Heart right ventricle (tissue), 16 donors: ENCODE measurements at regions of chr22 and their contacts with region 1.

Region 1: DNA sequence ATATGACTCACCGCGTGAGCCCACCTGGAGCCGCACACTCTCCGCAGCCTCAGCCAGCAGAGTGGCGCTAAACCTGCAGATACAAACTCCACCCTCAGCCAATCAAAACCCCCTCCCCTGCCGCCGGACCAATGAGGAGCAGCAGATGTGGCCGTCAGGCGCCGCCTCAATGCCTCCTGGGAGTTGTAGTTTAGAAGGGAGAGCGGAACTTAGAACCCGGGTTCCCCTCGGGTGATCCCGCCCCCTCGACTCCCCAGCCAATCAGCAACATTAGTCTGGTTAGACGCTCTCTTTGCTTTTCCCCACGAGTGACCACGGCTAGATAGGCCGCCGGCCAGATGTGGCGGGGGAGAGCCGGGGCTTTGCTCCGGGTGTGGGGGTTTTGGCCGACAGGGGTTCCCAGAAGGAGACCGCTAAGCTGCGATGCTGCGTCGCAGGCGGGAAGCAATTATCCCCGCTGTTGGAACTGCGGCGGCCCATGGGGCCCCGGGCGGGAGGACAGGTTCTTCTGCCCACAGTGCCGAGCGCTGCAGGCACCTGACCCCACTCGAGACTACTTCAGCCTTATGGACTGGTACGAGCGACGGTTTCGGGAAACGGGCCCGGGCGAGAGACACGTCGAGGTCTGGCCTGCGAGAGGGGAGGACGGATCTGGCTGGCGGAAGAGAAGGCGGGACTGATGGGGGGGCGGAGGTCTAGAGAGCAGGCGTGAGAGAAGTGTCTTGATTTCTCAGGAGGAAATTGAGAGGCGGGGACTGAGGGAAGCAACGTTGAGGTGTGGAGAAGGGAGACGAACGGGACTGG is at the starts of genes CHEK2 and HSCB:
- DNase-seq: peak; percentile 97 to 99
- ATAC-seq: peak; percentile 98 to 99 (median 99)
- H3K4me3 ChIP-seq: peak within 1 kb of the TSS; percentile 69 to 100 (median 80)
- H3K27ac ChIP-seq: peak within 1 kb of the TSS; percentile 91 to 100 (median 98)
- H3K4me1 ChIP-seq: peaks cover 3 to 22% (median 14%) of the 10 kb centered on the region in 9 donors
- H3K27me3 ChIP-seq: no peaks in the 10 kb centered on the region
- CTCF ChIP-seq: peak in 3 of 9 donors; percentile 5 to 32 (median 20)
- total RNA-seq, gene CHEK2: 0.74 to 8.0 (median 1.6) TPM
- total RNA-seq, gene HSCB: 7.1 to 13.8 (median 8.7) TPM

Region 2: DNA sequence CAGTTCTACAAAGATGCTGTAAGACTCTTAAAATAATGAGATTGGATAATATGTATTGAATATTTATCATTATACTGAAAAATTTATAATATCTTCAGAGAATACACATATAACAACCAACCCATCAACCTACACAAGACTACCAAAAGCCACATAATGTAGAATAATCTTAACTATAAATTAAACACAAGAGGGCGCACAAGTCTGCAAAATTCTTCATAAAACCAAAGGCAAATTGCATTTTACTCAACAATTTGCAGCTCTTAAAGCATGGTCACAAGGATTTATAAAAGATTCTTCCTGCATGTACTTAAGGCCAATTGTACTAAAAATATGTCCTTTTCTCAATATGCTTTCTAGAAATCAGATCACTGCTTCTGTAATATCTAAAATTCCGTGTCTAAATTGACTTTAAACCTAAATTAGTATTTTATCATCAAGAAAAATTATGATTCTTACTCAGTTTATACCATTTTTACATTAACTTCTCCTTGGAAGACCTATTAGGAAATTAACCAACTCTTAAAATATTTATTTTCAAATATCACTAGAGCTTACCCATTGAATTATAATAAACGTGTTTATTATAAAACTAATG is 141.3 kb before region 1 on chr22:
- intact Hi-C with region 1: loop called in 1 of 10 experiments (anchors 10 kb)
- DNase-seq: peak in 1 of 2 donors; percentile 17
- ATAC-seq: peak in 4 of 8 donors; percentile 28 to 39 (median 34)
- H3K4me3 ChIP-seq: no peak overlapping the region
- H3K27ac ChIP-seq: no peak overlapping the region
- H3K4me1 ChIP-seq: no peaks in the 10 kb centered on the region
- H3K27me3 ChIP-seq: no peaks in the 10 kb centered on the region
- CTCF ChIP-seq: peak in 8 of 9 donors; percentile 36 to 78 (median 62)

Region 3: GRCh38 chr22:28674121-28674563 is 67.8 kb before region 1 on chr22:
- intact Hi-C with region 1: loop called in 1 of 10 experiments (anchors 10 kb)
- DNase-seq: no peak
- ATAC-seq: no peak
- H3K4me3 ChIP-seq: no peak overlapping the region
- H3K27ac ChIP-seq: no peak overlapping the region
- H3K4me1 ChIP-seq: peaks cover 0 to 25% (median 9%) of the 10 kb centered on the region in 9 donors
- H3K27me3 ChIP-seq: peaks cover 0 to 86% (median 0%) of the 10 kb centered on the region in 7 donors
- CTCF ChIP-seq: no peak

Region 4: DNA sequence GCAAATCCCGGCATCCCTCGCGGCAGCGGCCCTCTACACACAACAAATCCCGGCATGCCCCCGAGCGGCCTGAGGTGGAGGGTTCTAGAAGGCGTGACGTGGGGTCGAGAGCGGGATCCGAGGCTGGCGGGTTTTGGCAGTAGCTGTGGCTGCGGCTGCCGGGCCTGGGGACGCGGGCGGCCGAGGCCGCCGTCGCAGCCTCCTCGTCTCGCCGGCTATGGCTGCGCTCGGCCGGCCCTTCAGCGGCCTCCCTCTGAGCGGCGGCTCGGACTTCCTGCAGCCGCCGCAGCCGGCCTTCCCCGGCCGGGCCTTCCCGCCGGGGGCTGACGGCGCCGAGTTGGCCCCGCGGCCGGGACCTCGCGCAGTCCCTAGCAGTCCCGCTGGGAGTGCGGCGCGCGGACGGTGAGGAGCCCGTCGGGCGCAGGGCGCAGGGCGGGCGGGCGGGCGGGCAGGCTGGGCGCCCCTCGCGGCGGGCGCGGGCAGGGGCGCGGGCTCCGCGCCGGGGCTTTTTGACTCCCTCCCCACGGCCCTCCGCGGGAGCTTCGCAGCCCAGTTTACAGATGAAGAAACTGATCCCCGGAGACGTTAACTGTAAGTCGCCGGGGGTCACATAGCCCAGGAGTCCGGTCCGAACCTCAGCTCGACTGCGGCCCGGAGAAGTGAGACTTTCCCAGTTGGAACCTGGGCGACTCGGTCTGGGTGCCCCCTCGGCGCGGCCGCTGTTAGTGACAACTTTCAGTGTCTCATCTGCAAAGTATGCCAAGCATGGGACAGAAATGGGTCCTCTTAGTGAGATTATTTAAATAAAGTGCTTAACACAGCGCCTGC is 30.9 kb after region 1 on chr22 and contains the start of gene CCDC117:
- intact Hi-C with region 1: loop called in 3 of 10 experiments (anchors 2 kb)
- DNase-seq: peak; percentile 95
- ATAC-seq: peak; percentile 97 to 99 (median 98)
- H3K4me3 ChIP-seq: peak within 1 kb of the TSS; percentile 65 to 88 (median 78)
- H3K27ac ChIP-seq: peak within 1 kb of the TSS; percentile 87 to 99 (median 97)
- H3K4me1 ChIP-seq: peaks cover 5 to 46% (median 33%) of the 10 kb centered on the region in 9 donors
- H3K27me3 ChIP-seq: no peaks in the 10 kb centered on the region
- CTCF ChIP-seq: peak in 4 of 9 donors; percentile 32 to 54 (median 36)
- total RNA-seq, gene CCDC117: 7.7 to 15.0 (median 11.5) TPM

Region 5: DNA sequence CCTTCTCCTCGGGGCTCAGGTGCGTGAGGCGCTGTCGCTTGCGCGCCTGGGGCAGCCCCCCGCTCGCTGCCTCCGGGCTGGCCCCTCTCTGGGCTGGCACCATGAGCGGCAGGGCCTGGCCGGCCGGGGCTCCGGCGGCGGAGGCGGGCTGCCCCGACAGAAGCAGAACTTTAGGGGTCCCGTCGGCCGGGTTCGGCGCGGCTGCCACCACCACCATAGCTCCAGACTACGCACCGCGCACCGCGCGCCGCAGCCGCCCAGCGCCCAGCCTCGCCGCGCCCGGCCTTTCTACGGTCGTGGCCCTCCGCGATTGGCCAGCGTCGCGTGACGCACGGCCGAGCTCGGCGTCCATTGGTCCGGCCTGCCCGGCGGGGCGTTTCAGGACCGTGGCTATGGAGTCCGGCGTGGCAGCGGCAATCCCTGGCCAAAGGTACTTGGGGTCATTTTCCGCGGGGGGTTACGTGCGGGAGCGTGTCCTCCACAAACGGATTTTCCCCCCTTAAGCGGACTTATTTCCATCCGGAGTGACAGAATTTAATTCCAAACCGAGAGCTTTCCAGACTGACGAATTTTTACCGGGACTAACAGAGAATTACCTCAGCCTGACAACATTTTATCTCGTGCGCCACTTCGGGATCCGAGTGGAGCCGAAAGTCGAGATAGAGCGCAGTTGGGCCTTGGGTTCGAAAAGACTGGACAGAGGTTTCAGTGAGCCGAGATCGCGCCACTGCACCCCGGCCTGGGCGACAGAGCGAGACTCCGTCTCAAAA is 58.5 kb after region 1 on chr22 and contains the start of gene XBP1:
- intact Hi-C with region 1: loop called in 1 of 10 experiments (anchors 1 kb)
- DNase-seq: peak; percentile 93 to 96
- ATAC-seq: peak; percentile 97 to 99 (median 98)
- H3K4me3 ChIP-seq: peak within 1 kb of the TSS; percentile 39 to 96 (median 88)
- H3K27ac ChIP-seq: peak within 1 kb of the TSS; percentile 93 to 100 (median 100)
- H3K4me1 ChIP-seq: peaks cover 11 to 62% (median 55%) of the 10 kb centered on the region in 9 donors
- H3K27me3 ChIP-seq: no peaks in the 10 kb centered on the region
- CTCF ChIP-seq: no peak
- total RNA-seq, gene XBP1: 56.5 to 140 (median 67.9) TPM